Sigmoid colon (tissue), 7 donors: ENCODE measurements at regions of chr13 and their contacts with region 1.

Region 1: GRCh38 chr13:40597740-40598370 is 68.6 kb downstream of the FOXO1 start:
- DNase-seq: no peak
- H3K4me3 ChIP-seq: no peak overlapping the region
- H3K27ac ChIP-seq: peak overlapping the region; percentile 28 to 63 (median 50)
- H3K4me1 ChIP-seq: peaks cover 0 to 78% (median 65%) of the 10 kb centered on the region in 4 donors
- H3K27me3 ChIP-seq: no peaks in the 10 kb centered on the region
- CTCF ChIP-seq: no peak
- EP300 ChIP-seq: no peak
- POLR2A ChIP-seq: no peak

Region 2: GRCh38 chr13:40401911-40402776 is 195.7 kb before region 1 on chr13:
- intact Hi-C with region 1: loop called (anchors 5 kb)
- DNase-seq: peak; percentile 99
- H3K4me3 ChIP-seq: peak overlapping the region in 2 of 4 donors; percentile 22 to 27
- H3K27ac ChIP-seq: peak overlapping the region; percentile 80 to 86 (median 83)
- H3K4me1 ChIP-seq: peaks cover 0 to 58% (median 47%) of the 10 kb centered on the region in 4 donors
- H3K27me3 ChIP-seq: no peaks in the 10 kb centered on the region
- CTCF ChIP-seq: no peak
- EP300 ChIP-seq: peak in 1 of 4 donors; percentile 4
- POLR2A ChIP-seq: no peak

Region 3: DNA sequence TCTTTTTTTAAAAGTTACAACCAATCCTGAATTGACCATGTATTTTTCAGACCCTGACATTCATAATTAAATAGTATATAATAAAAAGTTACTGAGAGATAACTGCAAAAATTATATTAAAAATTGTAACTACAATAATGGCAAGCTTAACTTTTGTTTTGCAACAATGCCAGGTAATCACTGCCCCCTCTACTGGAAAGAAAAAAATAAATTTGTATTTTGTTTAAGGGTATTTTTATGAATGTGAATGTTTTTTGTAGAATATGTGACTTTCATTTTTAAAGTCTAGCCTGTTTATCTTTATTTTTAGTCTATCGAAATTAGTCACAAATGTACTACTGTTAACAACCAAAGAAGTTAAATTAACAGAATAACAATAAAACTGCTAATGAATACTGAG is 151.5 kb after region 1 on chr13:
- intact Hi-C with region 1: no loop called
- DNase-seq: no peak
- H3K4me3 ChIP-seq: no peak overlapping the region
- H3K27ac ChIP-seq: no peak overlapping the region
- H3K4me1 ChIP-seq: no peaks in the 10 kb centered on the region
- H3K27me3 ChIP-seq: no peaks in the 10 kb centered on the region
- CTCF ChIP-seq: no peak
- EP300 ChIP-seq: no peak
- POLR2A ChIP-seq: no peak